ENCODE measurements at regions of chr10 and their contacts with region 1.

Region 1: DNA sequence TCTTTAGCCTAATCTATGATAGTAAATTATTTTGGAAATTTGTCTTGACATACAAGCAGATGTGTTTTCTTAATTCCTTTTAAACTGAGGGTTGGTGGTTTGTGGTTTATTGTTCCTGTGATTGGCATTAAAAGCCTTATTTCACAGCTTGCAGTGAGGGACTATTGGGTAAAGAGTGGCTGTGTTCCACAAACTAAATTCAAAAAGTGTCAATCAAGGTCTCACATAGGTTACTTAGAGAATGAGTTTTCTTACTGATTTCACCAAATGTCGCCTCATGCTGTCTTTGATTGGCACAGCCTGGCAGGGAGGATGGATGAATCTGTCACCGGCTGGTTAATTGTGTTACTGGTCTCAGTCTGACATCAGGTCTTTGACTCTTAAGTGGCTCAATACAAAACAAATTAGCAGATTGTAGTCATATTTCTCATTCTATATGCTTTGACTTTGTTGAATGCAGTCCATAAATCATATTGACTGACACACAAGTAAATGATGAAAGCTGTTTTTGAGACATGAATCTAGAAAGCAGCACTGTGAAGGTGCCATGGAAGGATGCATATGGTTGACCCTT is 66.8 kb upstream of the CYP26C1 start:
- H3K4me3 ChIP-seq: no peak overlapping the region
- H3K27ac ChIP-seq: no peak overlapping the region
- H3K4me1 ChIP-seq: peaks cover 3% of the 10 kb centered on the region; the same call in 1 of the 2 replicates
- CTCF ChIP-seq: no peak

Region 2: DNA sequence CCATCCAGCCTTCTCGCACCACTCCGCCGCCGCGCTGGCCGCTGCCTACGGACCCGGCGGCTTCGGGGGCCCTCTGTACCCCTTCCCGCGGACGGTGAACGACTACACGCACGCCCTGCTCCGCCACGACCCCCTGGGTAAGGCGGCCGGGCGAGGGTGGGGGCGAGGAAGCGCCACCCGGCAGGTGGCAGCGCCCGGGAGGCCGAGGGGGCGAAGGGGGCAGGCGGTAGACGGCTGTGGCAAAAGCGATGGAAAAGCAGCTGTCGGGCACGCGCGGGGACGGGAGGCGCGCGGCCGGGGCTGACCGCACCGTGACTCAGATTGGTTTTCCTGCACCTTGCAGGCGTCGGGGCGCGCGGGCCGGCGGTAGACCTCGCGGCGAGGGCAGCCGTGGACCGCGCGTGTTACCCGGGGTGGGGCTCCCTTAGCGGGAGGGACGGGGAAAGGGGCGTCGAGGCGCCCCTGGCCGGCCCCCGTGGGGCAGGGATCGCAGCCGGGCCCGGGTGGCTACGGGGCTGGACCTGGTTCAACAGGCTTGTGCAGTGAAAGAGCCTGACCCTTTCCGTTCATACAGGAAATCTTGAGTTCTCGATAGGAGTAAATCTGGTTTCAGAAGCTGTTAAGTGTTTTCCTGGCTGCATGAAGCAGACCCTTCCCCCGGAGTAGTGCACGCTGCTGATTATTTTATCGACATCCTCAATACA is 303.4 kb before region 1 on chr10:
- CTCF ChIA-PET with region 1: no interaction called
- POLR2A ChIA-PET with region 1: no interaction called
- H3K4me3 ChIP-seq: peak overlapping the region; percentile 61
- H3K27ac ChIP-seq: peak overlapping the region; percentile 78
- H3K4me1 ChIP-seq: peaks cover 6% of the 10 kb centered on the region
- CTCF ChIP-seq: peak; percentile 85; the same call in 1 of the 2 replicates

Region 3: GRCh38 chr10:92923416-92923815 is 70.4 kb before region 1 on chr10:
- CTCF ChIA-PET with region 1: no interaction called
- POLR2A ChIA-PET with region 1: no interaction called
- H3K4me3 ChIP-seq: no peak overlapping the region
- H3K27ac ChIP-seq: no peak overlapping the region
- H3K4me1 ChIP-seq: no peaks in the 10 kb centered on the region
- CTCF ChIP-seq: no peak

Region 4: GRCh38 chr10:93006435-93007039 is 12.8 kb after region 1 on chr10:
- CTCF ChIA-PET with region 1: interaction called, 17 read pairs
- POLR2A ChIA-PET with region 1: no interaction called
- H3K4me3 ChIP-seq: no peak overlapping the region
- H3K27ac ChIP-seq: no peak overlapping the region
- H3K4me1 ChIP-seq: no peaks in the 10 kb centered on the region
- CTCF ChIP-seq: 0 out of 2 replicates have a peak, but pooled peaks have one; percentile 31